Right cardiac atrium (tissue), 5 donors: ENCODE measurements at regions of chr2 and their contacts with region 1.

Region 1: DNA sequence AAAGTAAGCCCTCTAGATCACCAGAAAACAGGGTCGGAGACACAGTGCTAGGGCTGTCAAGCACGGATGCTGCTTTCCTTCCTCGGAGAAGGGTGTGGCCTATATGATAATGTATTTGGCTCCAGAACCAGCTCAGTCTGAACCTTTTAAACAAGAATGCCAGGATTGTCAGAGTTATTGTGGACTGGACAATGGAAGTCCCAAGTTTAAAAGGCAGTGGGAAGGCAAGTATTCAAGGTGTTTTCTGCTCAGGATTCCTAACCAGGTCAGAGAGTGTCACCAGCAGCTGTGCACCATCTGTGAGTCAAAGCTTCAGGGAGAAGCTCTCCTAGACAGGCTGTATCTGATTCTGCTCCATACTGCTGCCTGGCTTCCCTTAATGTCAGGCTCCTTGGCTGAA is 94.8 kb downstream of the SPOPL start:
- DNase-seq: no peak
- ATAC-seq: no peak
- H3K4me3 ChIP-seq: no peak overlapping the region
- H3K27ac ChIP-seq: no peak overlapping the region
- H3K4me1 ChIP-seq: no peaks in the 10 kb centered on the region
- H3K27me3 ChIP-seq: no peaks in the 10 kb centered on the region

Region 2: DNA sequence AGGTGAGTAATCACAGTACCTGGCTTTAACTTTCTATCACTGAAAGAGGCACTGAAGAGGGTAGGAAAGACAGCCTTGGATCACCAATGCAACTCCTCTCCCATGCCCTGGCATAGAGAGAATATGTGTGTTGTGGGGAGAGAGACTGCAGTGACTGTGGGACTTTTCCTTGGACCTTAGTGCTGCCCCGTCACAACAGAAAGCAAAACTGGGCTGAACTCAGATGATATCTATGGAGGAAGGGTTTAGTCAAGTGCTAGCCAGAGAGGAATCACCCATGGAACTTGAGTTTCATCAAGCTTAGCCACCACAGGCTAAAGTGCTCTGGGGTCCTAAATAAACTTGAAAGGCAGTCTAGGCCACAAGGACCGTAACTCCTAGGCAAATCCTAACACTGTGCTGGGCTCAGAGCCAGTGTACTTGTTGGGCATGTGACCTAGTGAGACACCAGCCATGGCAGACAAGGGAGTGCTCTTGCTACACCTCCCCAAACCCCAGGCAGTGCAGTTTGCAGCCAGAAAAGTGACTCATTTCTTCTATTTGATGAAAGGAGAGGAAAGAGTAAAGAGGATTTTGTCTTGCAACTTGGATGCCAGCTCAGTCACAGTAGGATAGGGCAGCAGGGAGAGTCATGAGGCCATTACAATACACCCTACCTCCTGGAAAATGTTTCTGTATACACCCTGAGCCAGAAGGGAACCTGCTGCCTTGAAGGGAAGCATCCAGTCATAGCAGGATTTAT is 200.7 kb before region 1 on chr2:
- intact Hi-C with region 1: no loop called
- DNase-seq: peak in 2 of 3 donors; percentile 57 to 58
- ATAC-seq: peak; percentile 66 to 95
- H3K4me3 ChIP-seq: no peak overlapping the region
- H3K27ac ChIP-seq: peak overlapping the region; percentile 51
- H3K4me1 ChIP-seq: no peaks in the 10 kb centered on the region
- H3K27me3 ChIP-seq: no peaks in the 10 kb centered on the region

Region 3: GRCh38 chr2:138707392-138708074 is 111.1 kb after region 1 on chr2:
- intact Hi-C with region 1: loop called in 1 of 4 experiments (anchors 10 kb)
- DNase-seq: no peak
- ATAC-seq: peak; percentile 73 to 85
- H3K4me3 ChIP-seq: no peak overlapping the region
- H3K27ac ChIP-seq: peak overlapping the region; percentile 34
- H3K4me1 ChIP-seq: no peaks in the 10 kb centered on the region
- H3K27me3 ChIP-seq: no peaks in the 10 kb centered on the region